Left lung (tissue), 14 donors: ENCODE measurements at regions of chr4 and their contacts with region 1.

Region 1: DNA sequence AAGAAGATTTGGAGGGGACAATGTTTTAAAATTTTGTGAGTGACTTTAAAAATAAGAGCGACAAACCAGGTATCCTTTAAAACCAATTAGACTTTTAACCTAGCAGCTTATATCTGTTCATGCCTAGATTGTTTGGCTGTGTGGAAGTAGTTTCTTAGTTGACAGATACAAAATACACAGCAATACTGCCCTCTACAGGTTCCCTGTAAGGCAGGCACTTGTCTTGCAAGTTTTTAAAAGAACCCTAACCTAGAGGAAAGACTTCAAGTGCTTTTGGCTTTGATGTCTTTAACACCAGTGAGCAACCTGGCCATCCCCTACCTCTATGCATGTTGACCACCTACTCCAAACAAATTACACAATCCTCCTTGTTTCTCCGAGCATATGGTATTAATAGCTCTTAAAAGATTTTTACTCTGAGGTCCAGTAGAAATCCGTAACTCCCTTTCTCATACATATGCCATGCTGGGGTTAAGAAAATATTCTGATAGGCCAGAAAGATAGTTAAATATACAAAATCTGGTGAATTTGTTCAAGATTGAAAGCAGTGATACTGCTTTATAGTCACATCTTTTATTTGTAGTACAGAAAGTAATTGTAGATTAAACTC is 273.0 kb downstream of the ARHGAP24 start:
- DNase-seq: peak in 2 of 4 donors; percentile 61 to 80
- ATAC-seq: peak; percentile 90
- H3K4me3 ChIP-seq: no peak overlapping the region
- H3K27ac ChIP-seq: no peak overlapping the region
- H3K4me1 ChIP-seq: peaks cover 0 to 33% of the 10 kb centered on the region in 2 donors
- H3K27me3 ChIP-seq: no peaks in the 10 kb centered on the region
- CTCF ChIP-seq: peak; percentile 77 to 83

Region 2: DNA sequence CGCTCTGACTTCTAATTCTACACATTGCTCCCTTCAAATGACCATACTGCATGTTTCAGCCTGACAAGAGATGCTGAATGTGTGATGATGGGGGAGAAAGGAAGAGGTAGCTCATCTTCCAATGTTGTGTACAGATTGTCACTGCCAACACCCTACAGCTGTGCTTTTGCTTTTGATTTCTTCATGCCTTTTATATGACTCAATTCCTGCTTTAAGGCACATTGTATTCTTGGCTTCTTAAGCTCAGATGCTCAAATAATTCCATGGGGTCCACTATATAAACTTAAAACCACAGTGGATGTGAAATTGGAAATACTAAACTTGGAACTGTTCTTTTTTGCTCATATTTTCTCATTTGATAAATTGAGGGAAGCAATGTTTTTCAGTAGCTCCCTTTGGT is 598.3 kb before region 1 on chr4:
- intact Hi-C with region 1: loop called in 1 of 2 experiments (anchors 10 kb)
- DNase-seq: no peak
- ATAC-seq: no peak
- H3K4me3 ChIP-seq: no peak overlapping the region
- H3K27ac ChIP-seq: no peak overlapping the region
- H3K4me1 ChIP-seq: no peaks in the 10 kb centered on the region
- H3K27me3 ChIP-seq: no peaks in the 10 kb centered on the region
- CTCF ChIP-seq: no peak

Region 3: DNA sequence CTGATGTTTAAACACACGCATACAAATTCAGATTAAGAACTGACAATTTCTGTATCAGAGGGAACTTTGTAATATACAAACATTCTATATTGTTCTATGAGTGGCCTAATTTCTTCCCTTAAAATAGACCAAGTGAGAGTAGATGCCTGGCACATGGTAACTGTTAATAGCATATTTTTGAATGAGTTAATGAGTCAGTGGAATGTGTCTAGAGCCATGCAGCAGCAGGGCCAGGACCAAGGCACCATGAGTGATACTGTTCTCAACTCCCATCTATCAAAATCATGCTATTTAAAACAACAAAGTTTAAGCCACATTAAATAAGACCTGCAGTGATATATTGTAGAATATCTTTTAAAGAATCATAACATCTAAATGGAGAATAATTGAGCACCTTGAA is 174.7 kb before region 1 on chr4:
- intact Hi-C with region 1: no loop called
- DNase-seq: no peak
- ATAC-seq: no peak
- H3K4me3 ChIP-seq: no peak overlapping the region
- H3K27ac ChIP-seq: no peak overlapping the region
- H3K4me1 ChIP-seq: no peaks in the 10 kb centered on the region
- H3K27me3 ChIP-seq: no peaks in the 10 kb centered on the region
- CTCF ChIP-seq: no peak